GM12878 (cell line): ENCODE measurements at regions of chr2 and their contacts with region 1.

Region 1: DNA sequence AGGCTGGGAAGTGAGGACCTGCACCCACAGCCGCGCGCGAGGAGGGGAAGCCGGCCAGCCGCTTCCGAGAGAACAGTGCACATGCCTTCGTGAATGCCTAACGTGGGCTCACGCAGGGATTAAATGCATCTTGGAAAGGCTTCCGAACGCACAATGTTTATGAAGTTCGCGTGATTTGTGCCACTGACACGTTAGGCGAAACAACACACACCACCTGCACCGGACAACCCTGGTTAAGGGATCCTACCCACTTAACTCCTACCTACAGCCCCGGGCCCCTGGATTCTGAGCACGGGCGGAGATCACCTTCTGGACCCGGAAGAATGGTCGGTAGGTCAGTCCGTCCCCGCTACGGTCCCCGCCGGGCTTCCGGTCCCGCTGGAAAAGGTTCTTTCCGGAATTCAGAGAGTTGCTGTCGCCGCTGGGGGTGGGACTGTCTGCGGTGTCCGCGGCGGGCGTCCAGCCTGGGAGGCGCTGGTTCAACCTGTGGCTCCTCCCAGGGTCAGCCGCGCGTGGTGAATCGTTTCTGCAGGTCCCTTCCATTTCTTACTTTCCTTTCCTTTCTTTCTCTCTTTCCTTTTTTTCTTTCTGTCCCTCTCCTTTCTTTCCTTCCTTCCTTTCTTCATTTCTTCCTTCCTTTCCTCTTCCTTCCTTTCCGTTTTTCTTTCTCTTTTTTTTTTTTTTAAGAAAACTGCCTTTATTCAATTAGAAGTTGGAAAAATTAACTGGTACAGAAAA is at the start of gene MTIF2:
- DNase-seq: peak; percentile 78
- ATAC-seq: peak; percentile 99
- H3K4me3 ChIP-seq: peak within 1 kb of the TSS; percentile 85
- H3K27ac ChIP-seq: peak within 1 kb of the TSS; percentile 83
- H3K4me1 ChIP-seq: no peaks in the 10 kb centered on the region
- H3K27me3 ChIP-seq: no peaks in the 10 kb centered on the region
- CTCF ChIP-seq: 0 out of 6 replicates have a peak, but pooled peaks of 1 of the 3 experiments have one; percentile 14
- EP300 ChIP-seq: no peak
- POLR2A ChIP-seq: peak; percentile 96
- RAD21 ChIP-seq: no peak; the same call in 1 of the 2 replicates
- polyA plus RNA-seq, gene MTIF2: 26.4 to 39.2 TPM

Region 2: GRCh38 chr2:55232084-55232862 is 36.8 kb before region 1 on chr2 and contains the starts of genes CLHC1 and RPS27A:
- CTCF ChIA-PET with region 1: no interaction called
- POLR2A ChIA-PET with region 1: interaction called, 8 read pairs
- RAD21 ChIA-PET with region 1: no interaction called
- SMC1A ChIA-PET with region 1: no interaction called
- in situ Hi-C with region 1: no loop called
- intact Hi-C with region 1: loop called (anchors 5 kb)
- DNase-seq: peak; percentile 85
- ATAC-seq: peak; percentile 85
- H3K4me3 ChIP-seq: peak within 1 kb of the TSS; percentile 93
- H3K27ac ChIP-seq: peak within 1 kb of the TSS; percentile 98
- H3K4me1 ChIP-seq: peaks cover 3% of the 10 kb centered on the region; the same call in 1 of the 2 replicates
- H3K27me3 ChIP-seq: no peaks in the 10 kb centered on the region
- CTCF ChIP-seq: no peak
- EP300 ChIP-seq: 0 out of 4 replicates have a peak, but pooled peaks of 1 of the 2 experiments have one; percentile 19
- POLR2A ChIP-seq: peak; percentile 98
- RAD21 ChIP-seq: no peak
- polyA plus RNA-seq, gene CLHC1: 2.6 to 3.2 TPM
- polyA plus RNA-seq, gene RPS27A: 3,416 to 4,705 TPM

Region 3: GRCh38 chr2:55282110-55282917 is 13.2 kb after region 1 on chr2:
- CTCF ChIA-PET with region 1: interaction called, 3 read pairs
- POLR2A ChIA-PET with region 1: interaction called, 3 read pairs
- RAD21 ChIA-PET with region 1: interaction called, 3 read pairs
- SMC1A ChIA-PET with region 1: interaction called, 9 read pairs
- in situ Hi-C with region 1: no loop called
- intact Hi-C with region 1: loop called (anchors 1 kb)
- DNase-seq: peak; percentile 56
- ATAC-seq: peak; percentile 99
- H3K4me3 ChIP-seq: peak overlapping the region; percentile 77
- H3K27ac ChIP-seq: peak overlapping the region; percentile 69
- H3K4me1 ChIP-seq: peaks cover 4% of the 10 kb centered on the region; the same call in 1 of the 2 replicates
- H3K27me3 ChIP-seq: no peaks in the 10 kb centered on the region
- CTCF ChIP-seq: no peak
- EP300 ChIP-seq: no peak
- POLR2A ChIP-seq: peak; percentile 98
- RAD21 ChIP-seq: no peak